Naive thymus-derived CD4-positive, alpha-beta T cell (primary cell): ENCODE measurements at regions of chr7 and their contacts with region 1.

Region 1: DNA sequence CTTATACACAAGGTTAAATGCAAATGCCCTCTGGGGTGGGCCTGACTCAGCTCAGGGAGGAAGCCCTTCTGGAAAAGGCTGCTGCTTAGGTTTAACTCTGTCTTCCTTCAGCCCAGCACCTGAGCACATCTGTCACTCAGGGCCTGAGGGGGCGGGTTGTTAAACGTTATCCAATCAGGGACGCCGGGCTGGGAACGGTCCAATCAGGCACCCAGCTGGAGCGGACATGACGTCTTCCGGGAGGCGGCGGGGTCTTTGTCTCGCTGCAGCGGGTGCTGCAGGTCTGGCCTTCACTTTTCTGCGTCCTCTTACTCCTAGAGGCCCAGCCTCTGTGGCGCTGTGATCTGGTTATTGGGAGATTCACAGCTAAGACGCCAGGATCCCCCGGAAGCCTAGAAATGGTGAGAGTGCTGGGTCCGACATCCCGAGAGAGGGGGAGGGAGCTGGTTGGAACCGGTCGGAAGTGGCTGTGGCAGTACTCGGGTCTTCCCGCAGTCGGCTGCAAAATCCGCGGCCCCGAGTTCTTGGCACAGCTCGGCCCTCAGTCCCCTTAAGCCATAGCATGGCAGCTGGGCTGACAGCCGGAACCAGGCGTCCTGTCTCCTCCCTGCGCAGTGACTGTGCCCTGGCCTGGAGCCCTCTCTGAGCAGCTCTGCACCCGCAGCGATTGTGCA is at the start of gene ZNF138:
- DNase-seq: peak; percentile 76 to 96 (median 94)
- ATAC-seq: peak; percentile 100
- H3K4me3 ChIP-seq: peak within 1 kb of the TSS; percentile 92
- H3K4me3 Mint-ChIP-seq: peak within 1 kb of the TSS; percentile 92 to 99 (median 98)
- H3K27ac ChIP-seq: peak within 1 kb of the TSS; percentile 83
- H3K27ac Mint-ChIP-seq: peak within 1 kb of the TSS; percentile 91 to 99 (median 98)
- H3K4me1 ChIP-seq: peaks cover 9 to 17% of the 10 kb centered on the region in 2 donors
- H3K4me1 Mint-ChIP-seq: peaks cover 18 to 56% (median 44%) of the 10 kb centered on the region in 7 donors
- H3K27me3 ChIP-seq: no peaks in the 10 kb centered on the region
- H3K27me3 Mint-ChIP-seq: no peaks in the 10 kb centered on the region
- total RNA-seq, gene ZNF138: 8.8 to 19.0 (median 10.6) TPM

Region 2: GRCh38 chr7:63900394-63901203 is 893.7 kb before region 1 on chr7:
- CTCF ChIA-PET with region 1: no interaction called
- POLR2A ChIA-PET with region 1: no interaction called
- intact Hi-C with region 1: loop called in 1 of 2 experiments (anchors 1 kb)
- DNase-seq: peak; percentile 64 to 95 (median 91)
- ATAC-seq: peak; percentile 97
- H3K4me3 ChIP-seq: peak overlapping the region; percentile 84
- H3K4me3 Mint-ChIP-seq: peak overlapping the region; percentile 82 to 100 (median 98)
- H3K27ac ChIP-seq: peak overlapping the region; percentile 89
- H3K27ac Mint-ChIP-seq: peak overlapping the region; percentile 88 to 99 (median 95)
- H3K4me1 ChIP-seq: no peaks in the 10 kb centered on the region
- H3K4me1 Mint-ChIP-seq: peaks cover 0 to 22% (median 9%) of the 10 kb centered on the region in 7 donors
- H3K27me3 ChIP-seq: no peaks in the 10 kb centered on the region
- H3K27me3 Mint-ChIP-seq: peaks cover 0 to 4% (median 0%) of the 10 kb centered on the region in 5 donors

Region 3: DNA sequence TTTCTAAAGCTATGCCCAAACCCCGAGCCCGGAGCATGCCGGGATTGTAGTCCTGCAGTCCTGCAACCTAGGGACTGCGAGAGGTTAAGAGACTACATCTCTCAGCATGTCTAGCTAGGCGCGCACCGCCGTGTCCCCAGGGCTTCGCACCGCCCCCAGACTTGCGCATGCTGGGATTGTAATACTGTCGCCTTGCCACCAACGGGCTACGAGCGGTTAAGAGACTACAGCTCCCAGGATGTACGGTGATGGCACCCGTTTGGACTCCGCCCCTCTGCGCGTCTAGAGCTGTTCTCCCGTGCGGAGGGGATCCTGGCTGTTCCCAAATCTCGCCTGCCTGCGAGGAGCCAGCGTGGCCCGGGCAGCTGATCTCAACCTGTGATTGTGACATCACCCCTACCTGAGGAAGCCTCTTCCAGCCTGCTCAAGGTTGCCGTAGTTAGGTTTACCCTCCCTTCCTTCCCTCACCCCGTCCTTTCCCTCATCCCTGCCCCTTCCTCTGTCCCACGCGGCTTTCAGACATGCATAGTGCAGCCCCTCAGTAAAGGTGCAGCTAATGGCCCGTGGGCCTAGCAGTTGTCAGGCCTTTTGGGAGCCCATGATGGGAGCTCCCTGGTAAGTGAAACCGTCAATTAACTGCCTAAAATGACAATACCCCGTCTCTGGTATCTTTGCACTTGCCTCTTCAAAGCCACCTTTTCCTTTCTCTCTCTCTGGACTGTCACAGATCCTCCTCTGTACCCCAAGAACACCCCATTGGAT is 486.9 kb before region 1 on chr7:
- CTCF ChIA-PET with region 1: interaction called, 4 read pairs
- POLR2A ChIA-PET with region 1: interaction called, 8 read pairs
- intact Hi-C with region 1: loop called (anchors 1 kb)
- DNase-seq: peak; percentile 76 to 95 (median 93)
- ATAC-seq: peak; percentile 99
- H3K4me3 ChIP-seq: peak overlapping the region; percentile 95
- H3K4me3 Mint-ChIP-seq: peak overlapping the region; percentile 90 to 100 (median 96)
- H3K27ac ChIP-seq: peak overlapping the region; percentile 83
- H3K27ac Mint-ChIP-seq: peak overlapping the region; percentile 94 to 99 (median 97)
- H3K4me1 ChIP-seq: peaks cover 0 to 13% of the 10 kb centered on the region in 2 donors
- H3K4me1 Mint-ChIP-seq: peaks cover 13 to 30% (median 19%) of the 10 kb centered on the region in 7 donors
- H3K27me3 ChIP-seq: no peaks in the 10 kb centered on the region
- H3K27me3 Mint-ChIP-seq: no peaks in the 10 kb centered on the region

Region 4: GRCh38 chr7:64562626-64563275 is 231.6 kb before region 1 on chr7 and contains the start of gene ZNF680:
- CTCF ChIA-PET with region 1: no interaction called
- POLR2A ChIA-PET with region 1: interaction called, 10 read pairs
- intact Hi-C with region 1: loop called (anchors 1 kb)
- DNase-seq: peak; percentile 64 to 93 (median 88)
- ATAC-seq: peak; percentile 99
- H3K4me3 ChIP-seq: peak within 1 kb of the TSS; percentile 95
- H3K4me3 Mint-ChIP-seq: peak within 1 kb of the TSS; percentile 93 to 100 (median 99)
- H3K27ac ChIP-seq: peak within 1 kb of the TSS; percentile 67
- H3K27ac Mint-ChIP-seq: peak within 1 kb of the TSS; percentile 89 to 98 (median 97)
- H3K4me1 ChIP-seq: no peaks in the 10 kb centered on the region
- H3K4me1 Mint-ChIP-seq: peaks cover 14 to 41% (median 35%) of the 10 kb centered on the region in 7 donors
- H3K27me3 ChIP-seq: no peaks in the 10 kb centered on the region
- H3K27me3 Mint-ChIP-seq: no peaks in the 10 kb centered on the region
- total RNA-seq, gene ZNF680: 10.0 to 20.4 (median 12.0) TPM

Region 5: GRCh38 chr7:64665980-64666662 is 128.2 kb before region 1 on chr7 and contains the start of gene ZNF107:
- CTCF ChIA-PET with region 1: interaction called, 3 read pairs
- POLR2A ChIA-PET with region 1: interaction called, 25 read pairs
- intact Hi-C with region 1: loop called (anchors 1 kb)
- DNase-seq: peak; percentile 48 to 90 (median 84)
- ATAC-seq: peak; percentile 98
- H3K4me3 ChIP-seq: peak within 1 kb of the TSS; percentile 92
- H3K4me3 Mint-ChIP-seq: peak within 1 kb of the TSS; percentile 92 to 98 (median 96)
- H3K27ac ChIP-seq: peak within 1 kb of the TSS; percentile 96
- H3K27ac Mint-ChIP-seq: peak within 1 kb of the TSS; percentile 96 to 98 (median 97)
- H3K4me1 ChIP-seq: peaks cover 11 to 19% of the 10 kb centered on the region in 2 donors
- H3K4me1 Mint-ChIP-seq: peaks cover 18 to 79% (median 71%) of the 10 kb centered on the region in 7 donors
- H3K27me3 ChIP-seq: no peaks in the 10 kb centered on the region
- H3K27me3 Mint-ChIP-seq: no peaks in the 10 kb centered on the region
- total RNA-seq, gene ZNF107: 11.2 to 33.5 (median 17.3) TPM

Region 6: DNA sequence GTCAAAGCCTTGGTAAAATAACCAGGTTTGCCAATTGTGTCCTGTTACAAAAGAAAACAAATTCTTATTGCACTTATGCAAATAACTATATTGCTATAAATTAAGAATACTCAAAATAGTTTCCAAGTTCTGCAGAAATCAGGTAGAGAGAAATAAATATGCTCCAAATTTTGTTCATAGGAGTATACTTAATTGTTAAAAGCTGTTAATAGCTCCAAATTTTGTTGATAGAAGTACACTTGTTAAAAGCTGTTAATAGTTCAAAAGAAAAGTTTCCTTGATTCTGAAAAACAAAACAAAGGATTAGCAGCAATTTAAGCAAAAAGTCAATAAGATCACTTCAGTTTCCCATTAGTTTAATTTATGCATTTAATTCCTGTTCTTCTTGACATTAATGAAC is 46.5 kb before region 1 on chr7:
- CTCF ChIA-PET with region 1: no interaction called
- POLR2A ChIA-PET with region 1: no interaction called
- intact Hi-C with region 1: no loop called
- DNase-seq: no peak
- ATAC-seq: no peak
- H3K4me3 ChIP-seq: no peak overlapping the region
- H3K4me3 Mint-ChIP-seq: no peak overlapping the region
- H3K27ac ChIP-seq: no peak overlapping the region
- H3K27ac Mint-ChIP-seq: no peak overlapping the region
- H3K4me1 ChIP-seq: no peaks in the 10 kb centered on the region
- H3K4me1 Mint-ChIP-seq: no peaks in the 10 kb centered on the region
- H3K27me3 ChIP-seq: no peaks in the 10 kb centered on the region
- H3K27me3 Mint-ChIP-seq: no peaks in the 10 kb centered on the region

Region 7: DNA sequence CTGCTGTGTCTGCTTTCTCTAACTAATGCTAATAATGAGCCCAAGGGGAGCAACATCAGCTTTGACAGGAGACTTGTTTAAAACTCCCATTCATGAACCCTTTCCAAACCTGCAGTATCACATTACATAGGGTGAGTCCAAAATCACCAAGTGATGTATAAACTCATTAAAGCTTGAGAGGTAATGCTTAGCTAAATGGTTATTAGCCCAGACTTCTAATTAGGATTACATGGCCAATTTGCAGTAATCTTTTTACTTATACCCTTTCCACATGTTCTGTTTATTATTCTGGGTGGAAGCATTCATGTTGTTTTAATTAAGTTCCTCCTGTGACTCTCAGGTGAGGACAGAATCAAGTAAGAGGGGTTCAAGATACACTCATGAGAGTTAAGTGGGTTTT is 17.5 kb after region 1 on chr7:
- CTCF ChIA-PET with region 1: no interaction called
- POLR2A ChIA-PET with region 1: no interaction called
- intact Hi-C with region 1: no loop called
- DNase-seq: no peak
- ATAC-seq: no peak
- H3K4me3 ChIP-seq: no peak overlapping the region
- H3K4me3 Mint-ChIP-seq: no peak overlapping the region
- H3K27ac ChIP-seq: no peak overlapping the region
- H3K27ac Mint-ChIP-seq: no peak overlapping the region
- H3K4me1 ChIP-seq: no peaks in the 10 kb centered on the region
- H3K4me1 Mint-ChIP-seq: peaks cover 0 to 6% (median 0%) of the 10 kb centered on the region in 7 donors
- H3K27me3 ChIP-seq: no peaks in the 10 kb centered on the region
- H3K27me3 Mint-ChIP-seq: no peaks in the 10 kb centered on the region

Region 8: GRCh38 chr7:65006094-65006992 is 212.0 kb after region 1 on chr7 and contains the start of gene ERV3-1:
- CTCF ChIA-PET with region 1: no interaction called
- POLR2A ChIA-PET with region 1: interaction called, 5 read pairs
- intact Hi-C with region 1: loop called (anchors 1 kb)
- DNase-seq: peak; percentile 76 to 96 (median 93)
- ATAC-seq: peak; percentile 99
- H3K4me3 ChIP-seq: peak within 1 kb of the TSS; percentile 72
- H3K4me3 Mint-ChIP-seq: peak within 1 kb of the TSS; percentile 75 to 96 (median 94)
- H3K27ac ChIP-seq: peak within 1 kb of the TSS; percentile 81
- H3K27ac Mint-ChIP-seq: peak within 1 kb of the TSS; percentile 73 to 98 (median 94)
- H3K4me1 ChIP-seq: peaks cover 4 to 21% of the 10 kb centered on the region in 2 donors
- H3K4me1 Mint-ChIP-seq: peaks cover 26 to 57% (median 45%) of the 10 kb centered on the region in 7 donors
- H3K27me3 ChIP-seq: no peaks in the 10 kb centered on the region
- H3K27me3 Mint-ChIP-seq: no peaks in the 10 kb centered on the region
- total RNA-seq, gene ERV3-1: 12.2 to 22.9 (median 14.9) TPM

Region 9: DNA sequence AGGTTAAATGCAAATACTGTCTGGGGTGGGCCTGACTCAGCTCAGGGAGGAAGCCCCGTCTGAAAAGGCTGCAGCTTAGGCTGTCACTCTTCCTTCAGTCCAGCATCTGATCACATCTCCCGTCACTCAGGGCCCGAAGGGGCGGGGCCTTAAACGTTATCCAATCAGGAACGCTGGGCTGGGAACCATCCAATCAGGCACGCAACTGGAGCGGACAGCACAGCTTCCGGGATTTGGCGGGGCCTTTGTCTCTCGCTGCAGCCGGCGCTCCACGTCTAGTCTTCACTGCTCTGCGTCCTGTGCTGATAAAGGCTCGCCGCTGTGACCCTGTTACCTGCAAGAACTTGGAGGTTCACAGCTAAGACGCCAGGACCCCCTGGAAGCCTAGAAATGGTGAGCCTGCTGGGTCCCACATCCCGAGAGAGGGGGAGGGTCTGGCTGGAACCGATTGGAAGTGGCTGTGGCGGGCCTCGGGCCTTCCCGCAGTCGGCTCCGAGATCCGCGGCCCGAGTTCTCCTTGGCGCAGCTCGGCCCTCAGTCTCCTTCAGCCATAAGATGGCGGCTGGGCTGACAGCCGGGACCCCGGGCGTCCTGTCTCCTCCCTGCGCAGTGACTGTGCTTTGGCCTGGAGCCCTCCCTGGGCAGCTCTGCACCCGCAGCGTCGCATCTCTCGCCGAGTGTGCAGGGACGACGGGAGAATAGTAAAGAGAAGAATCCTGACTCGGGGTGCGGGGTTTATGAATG is 579.5 kb after region 1 on chr7 and contains the start of gene ZNF92:
- CTCF ChIA-PET with region 1: no interaction called
- POLR2A ChIA-PET with region 1: interaction called, 3 read pairs
- intact Hi-C with region 1: loop called (anchors 2 kb)
- DNase-seq: peak; percentile 84 to 95 (median 94)
- ATAC-seq: peak; percentile 99
- H3K4me3 ChIP-seq: peak within 1 kb of the TSS; percentile 87
- H3K4me3 Mint-ChIP-seq: peak within 1 kb of the TSS; percentile 90 to 98 (median 96)
- H3K27ac ChIP-seq: peak within 1 kb of the TSS; percentile 82
- H3K27ac Mint-ChIP-seq: peak within 1 kb of the TSS; percentile 87 to 96 (median 93)
- H3K4me1 ChIP-seq: peaks cover 8 to 21% of the 10 kb centered on the region in 2 donors
- H3K4me1 Mint-ChIP-seq: peaks cover 18 to 57% (median 49%) of the 10 kb centered on the region in 7 donors
- H3K27me3 ChIP-seq: no peaks in the 10 kb centered on the region
- H3K27me3 Mint-ChIP-seq: no peaks in the 10 kb centered on the region
- total RNA-seq, gene ZNF92: 16.3 to 22.5 (median 19.3) TPM